ENCODE measurements at regions of chr1 and their contacts with region 1.

Region 1: GRCh38 chr1:33295450-33296081 is 25.3 kb downstream of the A3GALT2 start:
- DNase-seq: peak; percentile 95
- ATAC-seq: peak; percentile 82
- H3K4me3 Mint-ChIP-seq: no peak overlapping the region
- H3K27ac Mint-ChIP-seq: peak overlapping the region; percentile 78
- H3K4me1 Mint-ChIP-seq: peaks cover 12% of the 10 kb centered on the region
- H3K27me3 Mint-ChIP-seq: no peaks in the 10 kb centered on the region
- CTCF ChIP-seq: peak; percentile 99

Region 2: GRCh38 chr1:33181921-33182341 is 113.6 kb before region 1 on chr1 and contains the start of gene TRIM62:
- CTCF ChIA-PET with region 1: interaction called, 11 read pairs
- POLR2A ChIA-PET with region 1: no interaction called
- DNase-seq: peak; percentile 77
- ATAC-seq: peak; percentile 60
- H3K4me3 Mint-ChIP-seq: peak within 1 kb of the TSS; percentile 79
- H3K27ac Mint-ChIP-seq: peak within 1 kb of the TSS; percentile 60; the same call in 1 of the 2 replicates
- H3K4me1 Mint-ChIP-seq: peaks cover 24% of the 10 kb centered on the region
- H3K27me3 Mint-ChIP-seq: peaks cover 8% of the 10 kb centered on the region
- CTCF ChIP-seq: no peak
- total RNA-seq, gene TRIM62: 10.7 to 13.6 TPM (median 11.0 TPM) in 3 replicates

Region 3: DNA sequence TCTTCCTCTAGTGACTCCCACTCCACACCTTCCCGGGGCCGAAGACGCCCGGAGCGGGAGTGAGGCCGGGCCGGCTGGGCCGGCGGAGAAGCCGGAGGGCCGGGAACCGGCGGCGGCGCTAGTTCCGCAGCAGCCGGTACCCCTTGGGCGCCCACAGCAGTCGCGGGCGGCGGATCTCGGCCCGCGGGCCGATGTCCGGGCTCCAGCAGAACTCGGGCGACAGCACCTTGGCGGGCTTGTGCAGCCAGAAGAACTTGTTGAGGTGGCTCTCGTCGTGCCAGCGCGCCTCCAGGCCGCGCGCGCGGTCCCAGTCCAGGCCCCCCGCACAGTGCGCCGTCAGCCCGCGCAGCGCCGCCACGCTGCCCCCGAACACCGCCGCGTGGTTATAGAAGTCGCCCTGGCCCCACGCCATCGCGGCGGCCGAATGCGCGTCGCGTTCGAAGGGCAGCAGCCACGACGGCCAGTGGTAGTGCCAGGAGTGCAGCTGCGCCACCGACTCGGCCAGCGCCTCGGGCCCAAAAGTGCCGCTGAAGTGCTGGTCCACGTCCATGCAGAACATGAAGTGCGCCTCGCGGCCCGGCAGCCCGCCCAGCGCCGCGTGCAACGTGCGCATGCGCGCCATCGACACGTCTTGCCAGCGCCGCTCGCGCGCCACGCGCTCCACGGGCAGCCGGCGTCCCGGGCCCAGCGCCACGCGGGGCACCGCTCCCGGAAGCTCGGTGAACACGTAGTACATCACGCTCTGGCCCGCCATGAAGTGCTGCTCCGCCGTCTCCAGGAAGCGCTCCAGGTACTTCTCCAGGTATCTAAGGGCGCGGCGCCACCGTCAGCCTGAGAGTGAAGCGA is 11.3 kb after region 1 on chr1:
- CTCF ChIA-PET with region 1: interaction called, 29 read pairs
- POLR2A ChIA-PET with region 1: no interaction called
- DNase-seq: peak; percentile 40
- ATAC-seq: peak; percentile 73
- H3K4me3 Mint-ChIP-seq: peak overlapping the region; percentile 55
- H3K27ac Mint-ChIP-seq: no peak overlapping the region
- H3K4me1 Mint-ChIP-seq: peaks cover 3% of the 10 kb centered on the region; the same call in 1 of the 2 replicates
- H3K27me3 Mint-ChIP-seq: peaks cover 58% of the 10 kb centered on the region
- CTCF ChIP-seq: no peak

Region 4: GRCh38 chr1:33327587-33328315 is 32.2 kb after region 1 on chr1:
- CTCF ChIA-PET with region 1: interaction called, 13 read pairs
- POLR2A ChIA-PET with region 1: no interaction called
- DNase-seq: no peak
- ATAC-seq: no peak
- H3K4me3 Mint-ChIP-seq: no peak overlapping the region
- H3K27ac Mint-ChIP-seq: no peak overlapping the region
- H3K4me1 Mint-ChIP-seq: no peaks in the 10 kb centered on the region
- H3K27me3 Mint-ChIP-seq: no peaks in the 10 kb centered on the region; the same call in 1 of the 2 replicates
- CTCF ChIP-seq: no peak

Region 5: DNA sequence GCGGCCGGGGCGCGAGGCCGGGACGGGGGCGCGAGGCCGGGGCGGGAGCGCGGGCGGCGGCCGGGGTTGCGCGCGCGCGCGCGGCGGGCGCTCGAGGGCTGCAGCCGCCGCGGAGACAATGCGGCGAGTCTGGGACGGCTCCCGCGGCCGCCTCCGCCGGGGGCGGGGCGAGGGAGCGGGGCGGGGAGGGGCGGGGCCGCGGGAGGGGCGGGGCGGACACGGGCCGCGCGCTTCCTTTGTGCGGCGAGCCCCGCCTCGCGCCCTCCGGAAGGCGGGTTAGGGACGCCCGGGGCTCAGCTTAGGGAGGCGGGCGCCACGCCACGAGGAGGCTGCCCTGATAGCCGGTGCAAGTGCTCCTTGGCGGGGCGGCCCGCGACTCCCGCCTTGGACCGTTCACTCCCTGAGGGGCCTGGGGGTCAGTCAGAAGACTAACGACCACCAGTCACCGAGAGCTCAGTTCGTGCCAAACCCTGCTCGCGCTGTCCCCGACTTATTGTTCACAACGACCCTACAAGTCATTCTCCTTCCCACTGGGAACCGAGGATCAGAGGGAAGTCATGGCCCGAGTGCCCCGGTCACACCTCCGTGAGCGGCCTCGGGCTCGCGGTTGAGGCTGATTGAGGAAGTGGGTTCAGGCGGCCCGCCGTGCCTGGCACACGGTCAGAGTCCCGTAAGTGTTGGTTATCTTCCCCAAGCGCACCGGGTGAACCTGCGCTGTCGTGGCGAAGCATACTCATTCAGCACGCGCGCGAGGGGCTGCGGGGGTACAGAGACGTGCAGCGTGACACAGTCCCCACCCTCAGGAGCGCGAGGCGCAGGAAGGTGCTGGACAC is 54.4 kb after region 1 on chr1:
- CTCF ChIA-PET with region 1: interaction called, 13 read pairs
- POLR2A ChIA-PET with region 1: no interaction called
- DNase-seq: peak; percentile 75
- ATAC-seq: peak; percentile 84
- H3K4me3 Mint-ChIP-seq: peak overlapping the region; percentile 77
- H3K27ac Mint-ChIP-seq: no peak overlapping the region
- H3K4me1 Mint-ChIP-seq: peaks cover 30% of the 10 kb centered on the region
- H3K27me3 Mint-ChIP-seq: peaks cover 93% of the 10 kb centered on the region
- CTCF ChIP-seq: no peak

Region 6: DNA sequence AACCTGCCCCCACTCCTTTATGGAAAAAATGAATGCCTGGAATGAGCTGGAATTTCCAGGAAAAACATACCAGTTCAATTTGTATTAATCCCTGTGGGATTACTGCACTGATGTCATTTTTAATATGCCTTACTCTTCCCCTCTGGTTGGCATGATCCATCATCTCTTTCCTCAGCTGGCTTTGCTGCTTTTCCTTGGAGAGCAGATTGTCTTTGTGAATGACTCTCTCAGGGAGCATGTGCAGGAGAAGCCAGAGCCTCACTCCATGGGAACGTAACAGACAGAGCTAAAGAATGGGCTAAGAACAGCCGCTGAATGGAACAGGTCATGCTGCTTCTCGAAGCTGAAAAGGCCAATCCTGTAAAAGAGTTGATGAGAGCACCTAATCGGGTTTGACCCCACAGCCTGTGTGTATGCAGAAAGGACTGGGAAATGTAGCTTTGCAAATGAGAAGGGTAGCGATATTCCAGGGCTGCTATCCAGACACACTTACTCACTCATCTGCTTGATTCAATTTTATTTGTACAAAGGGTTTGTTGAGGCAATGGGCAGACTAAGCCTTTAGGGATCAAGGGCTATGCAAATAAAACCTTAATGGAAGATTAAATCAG is 114.6 kb after region 1 on chr1:
- CTCF ChIA-PET with region 1: no interaction called
- POLR2A ChIA-PET with region 1: no interaction called
- DNase-seq: no peak
- ATAC-seq: peak; percentile 77
- H3K4me3 Mint-ChIP-seq: no peak overlapping the region
- H3K27ac Mint-ChIP-seq: no peak overlapping the region
- H3K4me1 Mint-ChIP-seq: peaks cover 5% of the 10 kb centered on the region; the same call in 1 of the 2 replicates
- H3K27me3 Mint-ChIP-seq: peaks cover 3% of the 10 kb centered on the region; the same call in 1 of the 2 replicates
- CTCF ChIP-seq: no peak

Region 7: DNA sequence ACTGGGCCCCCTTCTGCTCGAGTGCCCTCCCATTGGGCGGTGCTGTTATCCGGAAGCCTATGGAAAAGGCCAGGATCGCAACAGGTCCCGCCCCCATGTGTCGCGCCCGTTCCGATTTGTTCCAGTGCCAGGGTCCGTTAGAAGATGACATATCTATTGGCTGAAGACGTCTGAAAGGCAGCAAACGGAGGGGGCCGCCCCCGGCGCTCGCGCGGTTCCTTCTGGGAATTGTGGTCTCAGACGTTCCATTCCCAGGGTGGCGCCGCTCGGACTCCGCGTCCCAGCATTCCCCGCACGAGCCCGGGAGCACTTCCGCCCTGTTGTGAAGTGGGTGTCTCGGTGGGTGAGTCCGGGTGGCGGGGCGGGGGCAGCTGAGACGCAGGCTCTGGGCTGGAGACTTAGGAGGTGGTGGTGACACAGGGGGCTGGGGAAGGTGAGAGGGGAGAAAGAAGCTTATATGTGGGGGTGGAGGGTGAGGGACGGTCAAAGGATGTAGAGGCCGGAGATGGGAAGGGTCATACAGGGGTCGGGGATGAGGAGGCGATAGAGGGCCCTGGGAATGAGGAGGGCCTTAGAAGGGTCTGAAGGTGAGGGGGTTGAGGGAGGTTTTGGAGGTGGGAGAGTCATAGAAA is 176.9 kb after region 1 on chr1 and contains the start of gene ZSCAN20:
- CTCF ChIA-PET with region 1: interaction called, 48 read pairs
- POLR2A ChIA-PET with region 1: no interaction called
- DNase-seq: peak; percentile 98
- ATAC-seq: peak; percentile 96
- H3K4me3 Mint-ChIP-seq: peak within 1 kb of the TSS; percentile 80
- H3K27ac Mint-ChIP-seq: no peak within 1 kb of the TSS
- H3K4me1 Mint-ChIP-seq: peaks cover 23% of the 10 kb centered on the region
- H3K27me3 Mint-ChIP-seq: no peaks in the 10 kb centered on the region; the same call in 1 of the 2 replicates
- CTCF ChIP-seq: no peak
- total RNA-seq, gene ZSCAN20: 3.7 to 5.4 TPM (median 4.0 TPM) in 3 replicates

Measured in WTC11 (cell line).